ENCODE measurements at regions of chr11 and their contacts with region 1.

Region 1: DNA sequence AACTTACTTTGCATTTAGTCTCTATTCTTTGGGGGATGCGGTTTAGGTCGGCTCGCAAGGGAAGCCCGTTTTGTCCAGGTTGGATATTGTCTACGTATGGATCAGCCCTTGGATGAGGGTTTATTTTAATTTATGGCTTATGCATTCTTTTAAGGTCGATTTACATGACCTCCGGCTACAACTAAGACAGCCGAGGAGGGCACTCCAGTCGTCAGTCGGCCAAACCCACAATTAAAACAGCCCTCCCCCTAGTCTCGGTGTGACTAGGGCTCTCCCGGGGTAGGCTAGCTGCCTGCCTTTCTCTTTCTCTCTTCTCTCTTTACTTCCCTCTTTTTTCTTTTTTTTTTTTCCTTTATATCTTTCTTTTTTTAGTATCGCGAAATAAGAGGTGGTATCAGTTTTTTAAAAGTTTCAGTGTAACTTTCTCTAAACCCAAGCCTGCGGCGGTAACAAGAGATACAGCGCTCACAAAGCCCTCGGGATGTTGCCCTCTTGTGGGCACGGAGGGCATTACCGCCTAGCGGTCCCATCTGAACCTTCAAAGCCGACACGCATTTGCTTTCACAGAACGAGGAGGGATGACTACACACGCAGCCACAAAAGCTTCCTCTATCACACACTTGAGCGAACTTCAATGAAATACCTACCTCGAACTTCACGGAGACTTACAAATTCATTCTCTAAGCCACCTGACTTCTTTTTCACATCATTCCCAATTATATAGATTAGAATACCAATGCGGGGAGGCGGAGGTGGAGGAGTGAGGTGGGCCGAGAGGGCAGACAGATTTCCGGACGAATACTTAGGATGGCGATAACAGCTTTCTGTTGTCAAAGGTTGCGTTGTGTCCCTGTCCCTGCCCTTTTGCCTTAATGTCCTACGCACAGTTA is 132.3 kb upstream of the C11orf58 start:
- DNase-seq: peak; percentile 75
- ATAC-seq: peak; percentile 71
- H3K4me3 ChIP-seq: peak overlapping the region in 2 of 3 experiments; percentile 59 to 72; a peak in 4 of 6 replicates
- H3K27ac ChIP-seq: no peak overlapping the region
- H3K4me1 ChIP-seq: peaks cover 47% of the 10 kb centered on the region
- H3K27me3 ChIP-seq: peaks cover 9 to 74% of the 10 kb centered on the region in 2 experiments
- CTCF ChIP-seq: peak; percentile 90
- EP300 ChIP-seq: no peak
- POLR2A ChIP-seq: no peak
- RAD21 ChIP-seq: peak; percentile 64

Region 2: GRCh38 chr11:15551901-15552851 is 1054.0 kb before region 1 on chr11:
- CTCF ChIA-PET with region 1: no interaction called
- POLR2A ChIA-PET with region 1: no interaction called
- in situ Hi-C with region 1: no loop called
- intact Hi-C with region 1: no loop called
- DNase-seq: no peak
- ATAC-seq: no peak
- H3K4me3 ChIP-seq: no peak overlapping the region
- H3K27ac ChIP-seq: no peak overlapping the region
- H3K4me1 ChIP-seq: no peaks in the 10 kb centered on the region
- H3K27me3 ChIP-seq: no peaks in the 10 kb centered on the region
- CTCF ChIP-seq: no peak
- EP300 ChIP-seq: no peak
- POLR2A ChIP-seq: no peak
- RAD21 ChIP-seq: no peak

Region 3: GRCh38 chr11:16043617-16044016 is 562.5 kb before region 1 on chr11:
- CTCF ChIA-PET with region 1: no interaction called
- POLR2A ChIA-PET with region 1: no interaction called
- in situ Hi-C with region 1: no loop called
- intact Hi-C with region 1: loop called (anchors 10 kb)
- DNase-seq: no peak
- ATAC-seq: no peak
- H3K4me3 ChIP-seq: no peak overlapping the region
- H3K27ac ChIP-seq: no peak overlapping the region
- H3K4me1 ChIP-seq: no peaks in the 10 kb centered on the region
- H3K27me3 ChIP-seq: no peaks in the 10 kb centered on the region
- CTCF ChIP-seq: no peak
- EP300 ChIP-seq: no peak
- POLR2A ChIP-seq: no peak
- RAD21 ChIP-seq: no peak

Region 4: GRCh38 chr11:16204261-16204660 is 401.9 kb before region 1 on chr11:
- CTCF ChIA-PET with region 1: no interaction called
- POLR2A ChIA-PET with region 1: no interaction called
- in situ Hi-C with region 1: no loop called
- intact Hi-C with region 1: loop called (anchors 5 kb)
- DNase-seq: peak; percentile 39
- ATAC-seq: peak; percentile 91
- H3K4me3 ChIP-seq: no peak overlapping the region; a peak in 1 of 6 replicates
- H3K27ac ChIP-seq: no peak overlapping the region
- H3K4me1 ChIP-seq: peaks cover 16% of the 10 kb centered on the region
- H3K27me3 ChIP-seq: no peaks in the 10 kb centered on the region
- CTCF ChIP-seq: no peak
- EP300 ChIP-seq: no peak
- POLR2A ChIP-seq: no peak
- RAD21 ChIP-seq: no peak

Region 5: GRCh38 chr11:16356057-16356760 is 249.9 kb before region 1 on chr11 and contains the start of gene SOX6:
- CTCF ChIA-PET with region 1: no interaction called
- POLR2A ChIA-PET with region 1: no interaction called
- in situ Hi-C with region 1: no loop called
- intact Hi-C with region 1: loop called (anchors 5 kb)
- DNase-seq: peak; percentile 94
- ATAC-seq: peak; percentile 100
- H3K4me3 ChIP-seq: peak within 1 kb of the TSS in 2 of 3 experiments; percentile 31 to 36; a peak in 2 of 6 replicates
- H3K27ac ChIP-seq: peak within 1 kb of the TSS; percentile 63
- H3K4me1 ChIP-seq: peaks cover 65% of the 10 kb centered on the region
- H3K27me3 ChIP-seq: no peaks in the 10 kb centered on the region
- CTCF ChIP-seq: peak; percentile 53
- EP300 ChIP-seq: peak in 1 of 2 experiments; percentile 59; a peak in 1 of 4 replicates
- POLR2A ChIP-seq: no peak
- RAD21 ChIP-seq: no peak
- total RNA-seq, gene SOX6: 11.1 and 11.2 TPM in 2 replicates

Region 6: GRCh38 chr11:16382638-16383380 is 223.3 kb before region 1 on chr11:
- CTCF ChIA-PET with region 1: no interaction called
- POLR2A ChIA-PET with region 1: no interaction called
- in situ Hi-C with region 1: no loop called
- intact Hi-C with region 1: no loop called
- DNase-seq: no peak
- ATAC-seq: no peak
- H3K4me3 ChIP-seq: no peak overlapping the region
- H3K27ac ChIP-seq: no peak overlapping the region
- H3K4me1 ChIP-seq: no peaks in the 10 kb centered on the region
- H3K27me3 ChIP-seq: no peaks in the 10 kb centered on the region
- CTCF ChIP-seq: no peak
- EP300 ChIP-seq: no peak
- POLR2A ChIP-seq: no peak
- RAD21 ChIP-seq: no peak

Region 7: DNA sequence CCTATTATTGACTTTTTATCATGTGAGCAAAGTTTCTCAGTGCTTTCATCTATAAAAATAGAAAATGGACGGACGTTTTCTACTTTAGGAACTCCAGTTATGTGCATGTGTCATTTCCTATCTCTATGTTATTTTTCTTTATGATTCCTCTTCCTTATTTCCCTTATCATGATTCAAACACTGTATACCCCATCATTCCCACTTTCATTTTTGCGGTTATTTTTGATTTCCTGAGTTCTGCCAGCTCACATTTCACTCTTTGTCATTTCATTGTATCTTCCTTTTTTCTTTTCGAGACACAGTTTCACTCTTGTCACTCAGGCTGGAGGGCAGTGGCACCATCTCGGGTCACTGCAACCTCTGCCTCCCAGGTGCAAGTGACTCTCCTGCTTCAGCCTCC is 153.7 kb after region 1 on chr11:
- CTCF ChIA-PET with region 1: no interaction called
- POLR2A ChIA-PET with region 1: no interaction called
- in situ Hi-C with region 1: no loop called
- intact Hi-C with region 1: no loop called
- DNase-seq: no peak
- ATAC-seq: no peak
- H3K4me3 ChIP-seq: no peak overlapping the region
- H3K27ac ChIP-seq: no peak overlapping the region
- H3K4me1 ChIP-seq: peaks cover 20% of the 10 kb centered on the region
- H3K27me3 ChIP-seq: no peaks in the 10 kb centered on the region
- CTCF ChIP-seq: no peak
- EP300 ChIP-seq: no peak
- POLR2A ChIP-seq: no peak
- RAD21 ChIP-seq: no peak